Naive thymus-derived CD4-positive, alpha-beta T cell (primary cell): ENCODE measurements at regions of chr12 and their contacts with region 1.

Region 1: DNA sequence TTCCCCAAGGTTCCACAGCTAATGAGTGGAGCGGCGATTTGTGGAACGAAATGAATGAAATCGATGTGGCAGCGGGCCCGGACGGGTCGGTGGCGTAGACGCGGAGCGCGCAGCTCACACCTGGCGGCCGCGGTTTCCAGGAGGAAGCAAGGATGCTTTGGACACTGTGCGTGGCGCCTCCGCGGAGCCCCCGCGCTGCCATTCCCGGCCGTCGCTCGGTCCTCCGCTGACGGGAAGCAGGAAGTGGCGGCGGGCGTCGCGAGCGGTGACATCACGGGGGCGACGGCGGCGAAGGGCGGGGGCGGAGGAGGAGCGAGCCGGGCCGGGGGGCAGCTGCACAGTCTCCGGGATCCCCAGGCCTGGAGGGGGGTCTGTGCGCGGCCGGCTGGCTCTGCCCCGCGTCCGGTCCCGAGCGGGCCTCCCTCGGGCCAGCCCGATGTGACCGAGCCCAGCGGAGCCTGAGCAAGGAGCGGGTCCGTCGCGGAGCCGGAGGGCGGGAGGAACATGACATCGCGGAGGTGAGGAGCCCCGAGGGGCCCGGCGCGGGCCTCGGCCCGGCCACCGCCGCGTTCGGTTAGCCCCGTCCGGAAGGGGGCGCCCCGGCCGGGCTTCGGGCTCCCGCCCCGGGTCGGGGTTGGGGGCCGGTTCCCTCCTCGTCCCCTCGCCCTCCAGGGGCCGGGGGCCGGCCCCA is at the start of gene PTPN11:
- DNase-seq: peak; percentile 84 to 96 (median 92)
- ATAC-seq: peak; percentile 95
- H3K4me3 ChIP-seq: peak within 1 kb of the TSS; percentile 100
- H3K4me3 Mint-ChIP-seq: peak within 1 kb of the TSS; percentile 91 to 100 (median 96)
- H3K27ac ChIP-seq: peak within 1 kb of the TSS; percentile 91
- H3K27ac Mint-ChIP-seq: peak within 1 kb of the TSS; percentile 95 to 100 (median 98)
- H3K4me1 ChIP-seq: peaks cover 24 to 28% of the 10 kb centered on the region in 2 donors
- H3K4me1 Mint-ChIP-seq: peaks cover 18 to 45% (median 40%) of the 10 kb centered on the region in 7 donors
- H3K27me3 ChIP-seq: no peaks in the 10 kb centered on the region
- H3K27me3 Mint-ChIP-seq: no peaks in the 10 kb centered on the region
- total RNA-seq, gene PTPN11: 43.5 to 94.7 (median 46.7) TPM

Region 2: DNA sequence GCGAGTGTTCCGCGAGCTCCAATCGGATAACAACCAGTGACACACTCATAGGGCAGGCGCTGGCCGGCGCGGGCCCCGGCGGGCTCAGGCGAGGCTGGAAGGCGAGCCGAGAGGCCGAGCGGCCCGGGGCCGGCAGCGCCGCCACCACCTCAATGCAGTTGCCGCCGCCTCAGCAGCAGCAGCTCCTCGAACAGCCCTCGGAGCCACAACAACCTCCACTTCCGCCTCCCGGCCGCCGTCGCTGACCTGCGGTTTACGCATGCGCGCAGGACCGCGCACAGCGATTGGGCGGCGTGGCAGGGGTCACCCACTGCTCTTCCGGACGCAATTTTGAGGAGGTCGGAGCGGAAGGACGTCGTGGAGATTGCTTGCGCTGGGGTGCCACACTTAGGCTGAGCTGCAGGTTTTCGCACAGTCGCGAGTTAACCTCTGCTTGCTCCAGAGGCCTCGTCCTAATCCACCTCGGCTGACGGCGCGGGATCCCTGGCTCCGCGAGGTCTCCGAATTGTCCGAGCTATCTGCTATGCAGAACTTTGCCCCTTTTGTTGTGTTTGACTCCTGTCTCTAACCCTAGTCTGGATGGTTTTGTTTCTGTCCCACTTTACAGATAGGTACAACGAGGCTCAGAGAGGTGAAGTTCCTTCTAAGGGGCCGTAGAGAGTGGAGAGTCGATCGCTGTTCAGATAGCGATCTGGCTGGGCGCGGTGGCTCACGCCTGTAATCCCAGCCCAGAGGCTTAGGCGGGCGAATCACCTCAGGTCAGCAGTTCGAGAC is 732.8 kb before region 1 on chr12 and contains the starts of genes ACAD10 and BRAP:
- CTCF ChIA-PET with region 1: no interaction called
- POLR2A ChIA-PET with region 1: no interaction called
- intact Hi-C with region 1: loop called in 1 of 2 experiments (anchors 10 kb)
- DNase-seq: peak; percentile 82 to 98 (median 93)
- ATAC-seq: peak; percentile 96
- H3K4me3 ChIP-seq: peak within 1 kb of the TSS; percentile 90
- H3K4me3 Mint-ChIP-seq: peak within 1 kb of the TSS; percentile 90 to 98 (median 96)
- H3K27ac ChIP-seq: peak within 1 kb of the TSS; percentile 83
- H3K27ac Mint-ChIP-seq: peak within 1 kb of the TSS; percentile 90 to 98 (median 96)
- H3K4me1 ChIP-seq: peaks cover 17 to 18% of the 10 kb centered on the region in 2 donors
- H3K4me1 Mint-ChIP-seq: peaks cover 23 to 54% (median 44%) of the 10 kb centered on the region in 7 donors
- H3K27me3 ChIP-seq: no peaks in the 10 kb centered on the region
- H3K27me3 Mint-ChIP-seq: peaks cover 0 to 2% (median 0%) of the 10 kb centered on the region in 5 donors
- total RNA-seq, gene ACAD10: 28.4 to 65.3 (median 36.0) TPM
- total RNA-seq, gene BRAP: 19.5 to 25.5 (median 23.0) TPM

Region 3: GRCh38 chr12:112303004-112303403 is 115.7 kb before region 1 on chr12:
- CTCF ChIA-PET with region 1: no interaction called
- POLR2A ChIA-PET with region 1: no interaction called
- intact Hi-C with region 1: no loop called
- DNase-seq: peak in 1 of 9 donors; percentile 29
- ATAC-seq: peak; percentile 76
- H3K4me3 ChIP-seq: no peak overlapping the region
- H3K4me3 Mint-ChIP-seq: no peak overlapping the region
- H3K27ac ChIP-seq: no peak overlapping the region
- H3K27ac Mint-ChIP-seq: peak overlapping the region in 2 of 9 donors; percentile 56 to 68
- H3K4me1 ChIP-seq: no peaks in the 10 kb centered on the region
- H3K4me1 Mint-ChIP-seq: peaks cover 0 to 10% (median 0%) of the 10 kb centered on the region in 7 donors
- H3K27me3 ChIP-seq: no peaks in the 10 kb centered on the region
- H3K27me3 Mint-ChIP-seq: no peaks in the 10 kb centered on the region

Region 4: DNA sequence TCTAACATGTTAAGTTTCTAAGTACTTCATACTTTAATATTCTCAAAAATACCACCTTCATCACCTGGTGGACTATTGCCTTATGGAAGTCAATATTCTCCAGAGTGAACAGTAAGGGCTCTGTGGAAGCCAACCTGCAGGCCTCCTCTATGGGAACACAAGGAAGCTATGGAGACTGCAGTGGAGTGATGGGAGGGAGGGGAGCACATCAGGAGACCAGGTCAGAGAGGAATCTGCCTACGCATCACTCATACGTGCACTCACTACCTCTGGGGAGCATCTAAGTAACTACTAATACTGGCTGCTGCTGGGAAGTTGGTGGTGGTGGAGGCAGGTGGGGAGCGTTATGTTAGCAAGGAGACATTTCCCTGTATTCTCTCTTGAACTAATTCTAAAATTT is 56.4 kb before region 1 on chr12:
- CTCF ChIA-PET with region 1: no interaction called
- POLR2A ChIA-PET with region 1: no interaction called
- intact Hi-C with region 1: no loop called
- DNase-seq: no peak
- ATAC-seq: no peak
- H3K4me3 ChIP-seq: no peak overlapping the region
- H3K4me3 Mint-ChIP-seq: no peak overlapping the region
- H3K27ac ChIP-seq: no peak overlapping the region
- H3K27ac Mint-ChIP-seq: no peak overlapping the region
- H3K4me1 ChIP-seq: no peaks in the 10 kb centered on the region
- H3K4me1 Mint-ChIP-seq: peaks cover 0 to 19% (median 13%) of the 10 kb centered on the region in 7 donors
- H3K27me3 ChIP-seq: no peaks in the 10 kb centered on the region
- H3K27me3 Mint-ChIP-seq: no peaks in the 10 kb centered on the region